ENCODE measurements at regions of chr10 and their contacts with region 1.

Region 1: GRCh38 chr10:86376852-86377796 is 10.5 kb upstream of the GRID1 start:
- DNase-seq: peak; percentile 86
- ATAC-seq: peak; percentile 96

Region 2: DNA sequence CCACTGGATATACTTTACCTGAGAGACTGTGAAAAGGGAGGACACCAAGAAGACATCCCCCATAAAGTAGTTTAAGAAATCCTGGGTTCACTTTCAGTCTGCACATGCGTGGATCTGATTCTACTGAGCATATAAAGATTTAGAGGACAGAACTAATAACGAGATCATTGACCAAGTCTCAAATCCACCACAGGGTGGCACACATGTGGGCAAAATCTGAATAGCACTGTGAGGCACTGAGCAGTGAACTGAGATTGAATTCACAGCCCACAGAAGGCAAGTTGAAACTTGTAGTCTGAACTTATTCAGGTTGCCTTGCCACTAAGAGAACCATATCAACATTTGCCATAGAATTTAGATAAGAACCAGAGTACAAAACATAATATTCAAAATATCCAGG is 829.1 kb before region 1 on chr10:
- intact Hi-C with region 1: loop called (anchors 10 kb)
- DNase-seq: no peak
- ATAC-seq: peak; percentile 39

Region 3: DNA sequence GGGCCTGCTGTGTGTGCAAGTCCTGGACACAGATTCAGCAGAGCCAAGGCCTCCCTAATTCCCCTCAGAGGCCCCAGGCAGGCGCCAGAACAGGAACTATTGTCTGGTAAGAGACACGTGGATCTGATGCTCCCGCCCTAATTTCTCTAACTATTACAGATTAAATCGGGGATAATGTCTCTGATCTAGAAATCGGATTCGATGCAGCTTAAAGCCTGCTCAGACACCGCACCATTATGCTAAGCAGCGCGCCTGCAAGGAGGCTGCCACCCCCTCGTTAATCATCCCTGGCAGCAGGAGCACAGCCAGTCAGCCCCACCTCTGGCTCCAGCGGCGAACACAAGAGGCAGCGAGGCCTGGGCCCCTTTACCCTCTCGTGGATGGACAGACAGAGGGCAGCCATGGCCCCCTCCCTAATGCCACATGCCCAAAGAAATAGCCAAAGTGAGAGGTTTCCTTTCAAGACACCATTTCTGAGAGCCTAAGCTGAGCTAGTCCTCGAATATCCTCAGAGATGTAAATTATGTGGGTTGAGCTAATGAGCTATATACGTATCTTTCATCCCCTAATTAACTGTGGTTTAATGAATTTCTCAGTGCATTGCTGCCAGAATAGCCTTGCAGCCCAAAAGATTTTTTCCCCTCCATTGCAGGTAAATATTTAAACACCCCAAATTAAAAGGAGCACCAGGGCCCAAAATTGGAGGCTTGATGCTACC is 132.7 kb before region 1 on chr10:
- intact Hi-C with region 1: no loop called
- DNase-seq: no peak
- ATAC-seq: no peak